Activated CD4-positive, alpha-beta memory T cell treated with anti-CD3 and anti-CD28 coated beads, Interleukin-2, amount 10 ng/mL, durations not matched to agents 7 days and 5 days (primary cell): ENCODE measurements at regions of chr15 and their contacts with region 1.

Region 1: GRCh38 chr15:70488002-70488605 is 275.3 kb downstream of the UACA start:
- DNase-seq: peak; percentile 75
- H3K4me3 Mint-ChIP-seq: no peak overlapping the region
- H3K27ac Mint-ChIP-seq: no peak overlapping the region
- H3K4me1 Mint-ChIP-seq: peaks cover 58% of the 10 kb centered on the region
- H3K27me3 Mint-ChIP-seq: peaks cover 75% of the 10 kb centered on the region

Region 2: GRCh38 chr15:70245932-70246331 is 242.2 kb before region 1 on chr15:
- CTCF ChIA-PET with region 1: no interaction called
- POLR2A ChIA-PET with region 1: no interaction called
- DNase-seq: no peak
- H3K4me3 Mint-ChIP-seq: no peak overlapping the region
- H3K27ac Mint-ChIP-seq: no peak overlapping the region
- H3K4me1 Mint-ChIP-seq: peaks cover 33% of the 10 kb centered on the region
- H3K27me3 Mint-ChIP-seq: peaks cover 5% of the 10 kb centered on the region

Region 3: GRCh38 chr15:70299931-70300869 is 187.9 kb before region 1 on chr15:
- CTCF ChIA-PET with region 1: interaction called, 3 read pairs
- POLR2A ChIA-PET with region 1: interaction called, 10 read pairs
- DNase-seq: peak; percentile 81
- H3K4me3 Mint-ChIP-seq: no peak overlapping the region
- H3K27ac Mint-ChIP-seq: no peak overlapping the region
- H3K4me1 Mint-ChIP-seq: peaks cover 16% of the 10 kb centered on the region
- H3K27me3 Mint-ChIP-seq: peaks cover 20% of the 10 kb centered on the region

Region 4: GRCh38 chr15:70474471-70475396 is 13.4 kb before region 1 on chr15:
- CTCF ChIA-PET with region 1: interaction called, 16 read pairs
- POLR2A ChIA-PET with region 1: interaction called, 34 read pairs
- DNase-seq: peak; percentile 28
- H3K4me3 Mint-ChIP-seq: peak overlapping the region; percentile 21
- H3K27ac Mint-ChIP-seq: no peak overlapping the region
- H3K4me1 Mint-ChIP-seq: peaks cover 31% of the 10 kb centered on the region
- H3K27me3 Mint-ChIP-seq: peaks cover 78% of the 10 kb centered on the region

Region 5: DNA sequence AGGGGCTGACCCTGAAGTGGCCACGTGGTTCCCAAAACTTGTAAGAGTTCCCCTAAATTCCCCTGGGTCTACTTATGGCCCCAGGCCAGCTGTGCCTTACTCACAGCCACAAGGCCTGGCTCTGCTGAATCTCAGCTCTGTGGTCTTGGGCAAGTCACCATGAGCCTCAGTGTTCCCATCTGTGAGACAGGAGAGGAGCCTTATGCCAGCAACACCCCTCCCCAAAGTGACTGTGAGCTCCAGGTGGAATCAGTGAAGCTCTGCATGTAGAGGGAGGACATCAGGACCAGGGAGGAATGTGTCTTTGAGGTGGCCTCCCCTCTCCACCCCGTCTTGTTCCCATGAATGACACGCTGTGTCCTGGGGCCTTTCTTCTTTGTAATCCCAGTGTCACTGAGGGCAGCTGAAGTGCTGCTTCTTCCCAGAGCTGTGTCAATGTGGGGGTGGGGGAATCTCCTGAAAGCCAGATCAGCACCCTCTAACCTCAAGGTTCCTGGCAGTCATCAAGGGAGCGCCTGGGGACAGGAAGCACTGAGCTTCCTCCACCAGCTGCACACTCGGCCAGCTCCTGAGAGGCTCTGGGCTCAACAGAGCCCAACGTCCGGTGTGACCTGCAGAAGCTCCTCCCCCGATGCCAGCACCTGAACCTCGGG is 16.3 kb after region 1 on chr15:
- CTCF ChIA-PET with region 1: interaction called, 17 read pairs
- POLR2A ChIA-PET with region 1: interaction called, 23 read pairs
- DNase-seq: peak; percentile 26
- H3K4me3 Mint-ChIP-seq: no peak overlapping the region
- H3K27ac Mint-ChIP-seq: peak overlapping the region; percentile 45
- H3K4me1 Mint-ChIP-seq: peaks cover 63% of the 10 kb centered on the region
- H3K27me3 Mint-ChIP-seq: peaks cover 43% of the 10 kb centered on the region

Region 6: DNA sequence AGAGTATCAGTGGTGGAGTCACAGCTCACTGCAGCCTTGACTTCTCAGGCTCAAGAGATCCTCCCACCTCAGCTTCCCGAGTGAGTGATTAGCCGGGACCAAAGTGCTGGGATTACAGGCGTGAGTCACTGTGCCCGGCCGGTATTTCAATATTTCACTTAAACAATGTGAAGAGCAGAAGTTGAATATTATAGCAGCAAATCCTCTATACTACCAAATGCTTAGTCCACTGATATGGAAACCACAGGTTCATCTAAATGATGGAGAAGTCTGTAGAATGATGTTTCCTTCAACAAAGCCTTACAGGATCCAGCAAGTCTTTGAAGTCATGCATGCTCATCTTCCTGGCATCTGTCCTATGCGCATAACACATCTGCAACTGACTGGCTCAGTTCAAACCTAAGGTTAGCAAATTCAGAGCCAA is 295.5 kb after region 1 on chr15:
- CTCF ChIA-PET with region 1: no interaction called
- POLR2A ChIA-PET with region 1: no interaction called
- DNase-seq: no peak
- H3K4me3 Mint-ChIP-seq: no peak overlapping the region
- H3K27ac Mint-ChIP-seq: no peak overlapping the region
- H3K4me1 Mint-ChIP-seq: no peaks in the 10 kb centered on the region
- H3K27me3 Mint-ChIP-seq: peaks cover 11% of the 10 kb centered on the region